Endothelial cell of umbilical vein (primary cell): ENCODE measurements at regions of chr2 and their contacts with region 1.

Region 1: DNA sequence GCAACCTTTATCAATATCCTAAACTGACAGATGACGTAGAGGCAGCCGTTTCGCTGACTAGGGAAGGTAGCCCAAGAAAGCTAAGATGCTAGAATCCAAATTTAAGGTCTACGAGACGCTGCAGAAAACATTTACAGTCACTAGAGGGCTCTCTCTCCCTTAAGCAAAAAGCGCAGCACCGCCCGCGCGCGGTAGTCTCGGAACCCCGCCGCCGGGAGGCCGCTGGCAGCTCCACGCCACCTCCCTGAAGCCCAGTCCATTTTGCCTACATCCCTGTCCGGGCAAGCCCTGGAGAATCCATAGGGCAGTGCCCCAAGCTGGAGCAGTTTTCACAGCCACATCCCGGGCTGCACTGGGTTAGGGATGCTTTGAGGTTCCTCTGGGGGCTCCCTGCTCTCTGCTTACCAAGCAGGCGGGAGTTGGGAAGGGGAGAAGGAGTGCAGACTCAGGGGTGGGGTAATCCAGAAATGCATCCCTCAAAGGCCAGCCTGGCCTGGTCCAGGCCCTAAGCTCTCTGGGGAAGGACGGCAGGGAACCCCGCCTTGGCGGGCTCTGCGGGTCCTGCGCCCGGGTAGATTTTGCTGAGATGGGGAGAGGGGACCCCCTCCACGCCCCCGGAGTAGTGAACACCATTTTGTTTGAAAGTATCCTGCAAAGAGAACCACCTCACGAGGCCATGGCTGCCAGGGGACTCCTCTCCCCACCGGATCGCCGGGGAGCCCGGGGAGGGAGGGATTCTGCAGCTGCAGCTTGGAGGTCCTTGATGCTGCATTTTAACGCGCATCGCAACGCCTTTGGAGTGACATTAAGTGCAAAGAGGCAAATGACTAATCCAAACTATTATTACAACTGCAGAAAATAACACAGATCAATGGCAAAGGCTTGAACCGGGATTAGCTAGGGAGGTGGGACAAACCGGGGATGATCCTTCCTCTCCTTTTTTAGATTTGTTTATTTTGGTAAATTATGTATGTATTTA is 1.3 kb upstream of the DPYSL5 start:
- DNase-seq: peak; percentile 58
- H3K4me3 ChIP-seq: no peak overlapping the region
- H3K27ac ChIP-seq: no peak overlapping the region
- H3K4me1 ChIP-seq: peaks cover 4% of the 10 kb centered on the region
- H3K27me3 ChIP-seq: peaks cover 56 to 74% of the 10 kb centered on the region in 2 experiments
- CTCF ChIP-seq: peak; percentile 65 to 72
- POLR2A ChIP-seq: no peak

Region 2: GRCh38 chr2:26598336-26598995 is 248.2 kb before region 1 on chr2:
- CTCF ChIA-PET with region 1: no interaction called
- POLR2A ChIA-PET with region 1: no interaction called
- dilution Hi-C with region 1: no loop called
- intact Hi-C with region 1: no loop called
- DNase-seq: no peak
- H3K4me3 ChIP-seq: no peak overlapping the region
- H3K27ac ChIP-seq: no peak overlapping the region
- H3K4me1 ChIP-seq: peaks cover 9% of the 10 kb centered on the region
- H3K27me3 ChIP-seq: peaks cover 17 to 28% of the 10 kb centered on the region in 2 experiments
- CTCF ChIP-seq: no peak
- POLR2A ChIP-seq: no peak

Region 3: GRCh38 chr2:26630669-26631360 is 215.8 kb before region 1 on chr2:
- CTCF ChIA-PET with region 1: no interaction called
- POLR2A ChIA-PET with region 1: no interaction called
- dilution Hi-C with region 1: no loop called
- intact Hi-C with region 1: no loop called
- DNase-seq: no peak
- H3K4me3 ChIP-seq: no peak overlapping the region
- H3K27ac ChIP-seq: no peak overlapping the region
- H3K4me1 ChIP-seq: no peaks in the 10 kb centered on the region
- H3K27me3 ChIP-seq: peaks cover 0 to 4% of the 10 kb centered on the region in 2 experiments
- CTCF ChIP-seq: no peak
- POLR2A ChIP-seq: no peak

Region 4: GRCh38 chr2:26792720-26793119 is 53.9 kb before region 1 on chr2:
- CTCF ChIA-PET with region 1: no interaction called
- POLR2A ChIA-PET with region 1: no interaction called
- dilution Hi-C with region 1: no loop called
- intact Hi-C with region 1: no loop called
- DNase-seq: no peak
- H3K4me3 ChIP-seq: no peak overlapping the region
- H3K27ac ChIP-seq: no peak overlapping the region
- H3K4me1 ChIP-seq: peaks cover under 1% of the 10 kb centered on the region
- H3K27me3 ChIP-seq: no peaks in the 10 kb centered on the region
- CTCF ChIP-seq: no peak
- POLR2A ChIP-seq: no peak

Region 5: GRCh38 chr2:26922405-26923188 is 76.0 kb after region 1 on chr2:
- CTCF ChIA-PET with region 1: interaction called, 63 read pairs
- POLR2A ChIA-PET with region 1: no interaction called
- dilution Hi-C with region 1: no loop called
- intact Hi-C with region 1: loop called (anchors 5 kb)
- DNase-seq: peak; percentile 33
- H3K4me3 ChIP-seq: no peak overlapping the region
- H3K27ac ChIP-seq: no peak overlapping the region
- H3K4me1 ChIP-seq: no peaks in the 10 kb centered on the region
- H3K27me3 ChIP-seq: peaks cover 2 to 5% of the 10 kb centered on the region in 2 experiments
- CTCF ChIP-seq: peak; percentile 24 to 63
- POLR2A ChIP-seq: no peak

Region 6: DNA sequence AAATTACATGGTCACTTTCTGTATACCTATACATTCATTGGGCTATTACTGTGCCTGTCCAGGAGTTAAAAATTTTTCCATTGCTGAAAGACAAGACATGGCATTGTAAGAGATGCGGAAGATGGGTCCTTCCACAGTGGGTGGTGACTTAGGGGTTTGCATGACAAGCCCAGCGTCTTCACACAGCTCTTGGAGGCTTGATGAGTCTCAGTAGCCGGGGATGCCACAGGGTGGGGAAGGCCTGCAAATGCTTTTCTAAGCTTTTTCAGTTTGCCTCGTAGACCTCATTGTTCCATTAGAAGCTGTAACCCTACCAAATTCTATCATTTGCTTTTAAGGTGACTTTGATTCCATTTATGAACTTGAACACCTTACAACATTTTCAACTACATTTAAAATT is 105.8 kb after region 1 on chr2:
- CTCF ChIA-PET with region 1: interaction called, 10 read pairs
- POLR2A ChIA-PET with region 1: no interaction called
- dilution Hi-C with region 1: no loop called
- intact Hi-C with region 1: no loop called
- DNase-seq: no peak
- H3K4me3 ChIP-seq: no peak overlapping the region
- H3K27ac ChIP-seq: no peak overlapping the region
- H3K4me1 ChIP-seq: no peaks in the 10 kb centered on the region
- H3K27me3 ChIP-seq: peaks cover 16 to 29% of the 10 kb centered on the region in 2 experiments
- CTCF ChIP-seq: no peak
- POLR2A ChIP-seq: no peak

Region 7: GRCh38 chr2:27016801-27017325 is 170.2 kb after region 1 on chr2:
- CTCF ChIA-PET with region 1: interaction called, 79 read pairs
- POLR2A ChIA-PET with region 1: no interaction called
- dilution Hi-C with region 1: no loop called
- intact Hi-C with region 1: loop called (anchors 1 kb)
- DNase-seq: peak; percentile 63
- H3K4me3 ChIP-seq: no peak overlapping the region
- H3K27ac ChIP-seq: no peak overlapping the region
- H3K4me1 ChIP-seq: peaks cover 13% of the 10 kb centered on the region
- H3K27me3 ChIP-seq: no peaks in the 10 kb centered on the region
- CTCF ChIP-seq: peak; percentile 68 to 70
- POLR2A ChIP-seq: no peak

Region 8: DNA sequence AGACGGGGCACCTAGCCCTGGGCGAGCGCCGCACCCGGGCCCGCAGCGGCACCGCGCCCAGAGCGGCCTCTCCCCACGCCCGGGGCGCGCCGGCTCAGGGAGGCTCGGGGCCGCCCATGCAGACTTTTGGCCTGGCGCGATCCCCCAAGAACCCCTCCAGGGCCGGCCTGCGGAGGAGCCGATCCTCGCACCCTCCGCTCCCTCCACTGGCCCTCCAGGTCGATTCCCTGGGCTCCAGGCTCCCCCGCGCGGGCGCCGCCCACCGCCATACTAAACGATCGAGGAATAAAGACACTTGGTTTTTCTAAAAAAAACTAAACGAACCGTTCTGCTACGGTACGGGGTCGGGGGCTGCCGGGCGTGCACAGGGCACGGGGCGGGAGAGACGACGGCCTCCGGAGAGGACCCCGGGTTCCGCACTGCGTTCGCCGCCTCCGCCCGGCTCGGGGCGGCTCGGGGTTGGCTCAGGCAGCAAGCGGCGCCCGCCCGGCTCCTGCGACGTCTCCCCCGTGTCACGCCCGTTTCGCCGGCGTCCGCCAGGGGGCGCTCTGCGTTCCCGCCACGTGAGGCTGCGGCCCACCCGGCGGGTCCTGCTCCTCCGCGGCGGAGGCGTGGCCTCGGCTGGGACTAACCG is 239.6 kb after region 1 on chr2:
- CTCF ChIA-PET with region 1: interaction called, 8 read pairs
- POLR2A ChIA-PET with region 1: no interaction called
- dilution Hi-C with region 1: no loop called
- intact Hi-C with region 1: loop called (anchors 5 kb)
- DNase-seq: peak; percentile 94
- H3K4me3 ChIP-seq: peak overlapping the region; percentile 55 to 73 (median 64)
- H3K27ac ChIP-seq: peak overlapping the region; percentile 51
- H3K4me1 ChIP-seq: peaks cover 12% of the 10 kb centered on the region
- H3K27me3 ChIP-seq: no peaks in the 10 kb centered on the region
- CTCF ChIP-seq: peak; percentile 76 to 86
- POLR2A ChIP-seq: peak; percentile 62